ENCODE measurements at regions of chr19 and their contacts with region 1.

Region 1: DNA sequence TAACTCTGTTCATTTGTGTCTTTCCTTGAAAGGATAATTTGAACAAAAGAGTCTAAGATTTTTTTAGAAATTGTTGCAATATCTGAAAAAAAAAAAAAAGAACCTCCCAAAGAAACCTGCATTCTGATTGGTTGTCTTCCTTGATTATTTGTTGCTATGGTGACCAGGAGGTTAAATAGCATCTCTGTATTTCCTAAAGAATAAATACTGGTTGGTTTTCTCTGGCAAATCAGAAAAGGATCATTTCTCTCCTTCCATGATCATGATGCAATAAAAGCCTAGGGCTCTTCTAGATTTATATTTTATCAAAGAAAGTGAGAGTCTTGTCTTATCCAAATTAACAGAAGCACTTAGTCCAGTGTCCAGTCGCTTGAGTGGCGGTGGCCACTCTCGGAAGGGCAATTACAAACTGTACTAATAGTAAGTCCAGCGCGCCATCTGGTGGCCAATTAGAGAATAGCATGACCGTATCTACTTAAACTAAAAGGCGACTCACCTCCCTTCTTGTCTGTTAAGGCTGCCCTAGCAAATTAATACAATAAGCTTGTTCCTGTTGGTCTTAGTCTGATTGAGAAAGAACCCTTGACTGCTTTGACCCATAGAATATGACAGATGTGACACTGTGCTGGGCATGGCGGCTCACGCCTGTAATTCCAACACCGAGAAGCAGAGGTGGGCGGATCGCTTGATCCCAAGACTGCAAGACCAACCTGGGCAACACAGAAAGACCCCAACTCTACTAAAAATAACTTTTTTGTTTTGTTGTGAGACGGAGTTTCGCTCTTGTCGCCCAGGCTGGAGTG is 47.0 kb upstream of the PNMA8B start:
- DNase-seq: peak; percentile 76
- H3K4me3 ChIP-seq: no peak overlapping the region
- H3K27ac ChIP-seq: no peak overlapping the region
- H3K4me1 ChIP-seq: no peaks in the 10 kb centered on the region
- H3K27me3 ChIP-seq: no peaks in the 10 kb centered on the region
- CTCF ChIP-seq: peak; percentile 72 to 75

Region 2: DNA sequence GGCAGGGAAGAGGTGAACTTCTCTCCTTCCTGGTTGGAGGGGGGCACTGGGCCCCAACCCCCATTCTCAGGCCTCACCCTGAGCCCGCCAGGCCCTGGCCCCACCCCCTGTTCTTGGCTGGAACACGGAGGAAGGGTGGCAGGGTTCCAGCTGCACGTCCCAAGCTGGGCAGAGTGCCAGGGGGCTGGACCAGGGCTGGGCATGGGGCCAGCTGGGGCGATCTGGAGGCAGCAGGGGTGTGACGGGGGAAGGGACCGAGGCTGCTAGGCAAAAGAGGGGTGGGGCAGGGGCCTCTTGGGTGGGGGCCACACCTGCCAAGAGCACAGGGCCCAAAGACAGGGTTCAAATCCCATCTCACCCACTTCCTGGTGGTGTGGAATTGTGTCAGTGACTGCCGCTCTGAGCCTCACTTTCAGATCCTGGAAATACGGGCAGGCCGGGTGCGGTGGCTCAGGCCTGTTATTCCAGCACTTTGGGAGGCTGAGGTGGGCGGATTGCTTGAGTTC is 243.6 kb before region 1 on chr19:
- CTCF ChIA-PET with region 1: no interaction called
- dilution Hi-C with region 1: loop called (anchors 5 kb)
- in situ Hi-C with region 1: no loop called
- intact Hi-C with region 1: no loop called
- DNase-seq: peak; percentile 71
- H3K4me3 ChIP-seq: no peak overlapping the region
- H3K27ac ChIP-seq: no peak overlapping the region
- H3K4me1 ChIP-seq: peaks cover 29% of the 10 kb centered on the region
- H3K27me3 ChIP-seq: no peaks in the 10 kb centered on the region
- CTCF ChIP-seq: no peak

Region 3: GRCh38 chr19:46600384-46601317 is 58.0 kb after region 1 on chr19:
- CTCF ChIA-PET with region 1: no interaction called
- dilution Hi-C with region 1: no loop called
- in situ Hi-C with region 1: no loop called
- intact Hi-C with region 1: loop called (anchors 5 kb)
- DNase-seq: peak; percentile 97
- H3K4me3 ChIP-seq: peak overlapping the region; percentile 77 to 98 (median 97)
- H3K27ac ChIP-seq: peak overlapping the region; percentile 100
- H3K4me1 ChIP-seq: peaks cover 16% of the 10 kb centered on the region
- H3K27me3 ChIP-seq: no peaks in the 10 kb centered on the region
- CTCF ChIP-seq: no peak

Region 4: DNA sequence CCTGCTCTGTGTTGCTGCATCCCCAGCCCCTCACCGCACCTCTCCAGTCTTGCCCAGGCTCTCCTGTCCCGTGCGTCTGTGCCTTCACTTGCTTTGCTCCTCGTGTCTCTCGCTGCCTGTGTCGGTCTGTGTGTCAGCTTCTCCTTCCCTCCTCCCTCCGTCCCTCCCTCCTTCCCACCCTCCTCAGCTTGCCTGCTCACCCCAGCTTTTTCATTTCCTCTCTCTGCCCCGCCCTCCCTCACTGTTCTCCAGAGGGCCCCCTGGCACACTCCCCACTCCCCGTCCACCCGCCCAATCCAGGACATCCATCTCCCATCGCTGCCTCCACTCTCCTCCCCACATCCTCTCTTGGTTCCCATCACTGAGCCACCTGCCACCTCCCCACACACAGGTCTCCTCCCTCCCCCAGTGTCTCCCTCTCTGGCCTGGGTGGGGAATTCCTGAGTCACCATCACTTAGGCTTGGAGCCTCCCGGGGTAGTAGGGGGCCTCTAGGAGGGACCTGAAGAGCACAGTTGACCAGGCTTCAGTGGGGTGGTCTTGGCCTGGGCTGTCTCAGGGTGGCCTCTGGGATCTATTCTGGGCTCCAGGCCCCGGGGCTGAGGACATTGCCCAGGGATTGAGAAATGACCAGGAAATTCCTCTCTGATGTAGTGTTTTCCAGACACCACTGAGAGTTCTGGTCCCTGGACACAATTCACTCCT is 82.5 kb after region 1 on chr19 and contains the start of gene PTGIR:
- CTCF ChIA-PET with region 1: no interaction called
- dilution Hi-C with region 1: loop called (anchors 5 kb)
- in situ Hi-C with region 1: no loop called
- intact Hi-C with region 1: no loop called
- DNase-seq: no peak
- H3K4me3 ChIP-seq: no peak within 1 kb of the TSS
- H3K27ac ChIP-seq: no peak within 1 kb of the TSS
- H3K4me1 ChIP-seq: no peaks in the 10 kb centered on the region
- H3K27me3 ChIP-seq: no peaks in the 10 kb centered on the region
- CTCF ChIP-seq: no peak
- total RNA-seq, gene PTGIR: under 0.01 TPM in 1 of 2 donors, not detected in the other